Activated naive CD4-positive, alpha-beta T cell treated with anti-CD3 and anti-CD28 coated beads for 36 hours (primary cell): ENCODE measurements at regions of chr2 and their contacts with region 1.

Region 1: DNA sequence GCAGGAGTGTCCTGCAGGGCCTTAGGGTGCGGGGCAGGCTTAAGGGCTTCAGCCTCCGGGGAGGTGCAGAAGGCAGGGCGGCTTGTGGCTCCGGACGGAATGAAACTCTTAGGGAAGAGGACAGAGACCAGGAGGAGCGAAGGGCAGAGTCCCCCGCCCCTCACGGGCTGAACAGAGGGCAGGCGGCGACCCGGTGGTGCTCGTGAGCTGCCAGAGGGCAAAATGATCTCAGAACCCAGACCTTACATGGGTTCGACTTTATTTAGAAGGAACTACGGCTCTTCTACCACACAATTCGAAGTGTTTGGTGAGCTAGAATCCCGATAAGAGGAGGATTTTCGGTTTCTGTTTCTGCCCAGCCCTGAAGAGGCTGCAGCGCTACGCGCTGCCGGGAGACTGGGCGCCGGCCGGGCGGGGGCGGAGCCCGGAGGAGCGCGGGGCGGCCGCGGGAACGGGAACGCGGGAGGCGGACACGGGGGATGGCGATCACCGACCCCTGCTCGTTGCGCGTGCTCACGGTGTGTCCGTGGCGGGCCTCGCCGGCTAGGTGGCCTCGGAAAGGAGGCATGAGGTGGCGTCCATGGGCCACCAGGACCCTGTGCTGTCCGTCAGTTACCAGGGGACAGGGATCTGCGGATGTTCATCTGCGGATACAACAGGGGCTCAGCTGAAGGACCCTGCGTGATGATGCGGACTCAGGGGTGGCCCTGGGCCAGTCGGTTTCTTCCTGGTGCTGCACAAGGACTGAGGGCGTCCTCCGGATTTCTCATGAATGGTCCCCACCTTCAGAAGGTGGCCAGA is 4.2 kb upstream of the SP100 start:
- DNase-seq: peak; percentile 68
- H3K4me3 Mint-ChIP-seq: peak overlapping the region; percentile 90
- H3K27ac Mint-ChIP-seq: peak overlapping the region; percentile 85
- H3K4me1 Mint-ChIP-seq: peaks cover 72% of the 10 kb centered on the region
- H3K27me3 Mint-ChIP-seq: no peaks in the 10 kb centered on the region

Region 2: DNA sequence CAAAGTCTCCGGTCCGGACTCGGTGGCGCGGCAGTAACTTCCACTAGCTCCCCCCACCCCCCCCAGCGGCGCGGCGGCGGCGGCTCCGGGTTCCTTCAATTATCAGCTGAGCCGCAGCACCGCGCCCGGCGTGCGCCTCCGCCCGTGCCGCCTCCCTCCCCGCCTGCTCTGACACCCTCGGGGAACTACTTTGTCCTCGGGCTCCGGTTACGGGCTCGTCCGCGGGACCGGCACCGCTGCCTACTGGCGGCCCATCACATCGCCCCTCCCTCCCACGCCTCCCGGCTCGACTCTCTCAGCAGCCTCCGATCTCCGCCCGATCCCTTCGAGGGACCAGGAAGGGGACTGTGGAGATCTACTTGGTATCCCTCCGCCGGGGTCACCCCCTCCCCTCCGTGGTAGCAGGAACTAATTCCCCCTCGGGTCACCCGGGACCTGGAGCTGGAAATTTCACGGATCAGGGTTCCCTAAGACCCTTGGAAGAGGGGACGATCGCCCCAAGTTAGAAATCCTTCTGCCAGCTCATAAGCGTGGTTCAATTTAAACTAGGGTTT is 489.8 kb before region 1 on chr2 and contains the start of gene TRIP12:
- CTCF ChIA-PET with region 1: no interaction called
- intact Hi-C with region 1: loop called (anchors 5 kb)
- DNase-seq: peak; percentile 91
- H3K4me3 Mint-ChIP-seq: peak within 1 kb of the TSS; percentile 90
- H3K27ac Mint-ChIP-seq: peak within 1 kb of the TSS; percentile 99
- H3K4me1 Mint-ChIP-seq: peaks cover 34% of the 10 kb centered on the region
- H3K27me3 Mint-ChIP-seq: no peaks in the 10 kb centered on the region
- total RNA-seq, gene TRIP12: 188 to 190 TPM

Region 3: DNA sequence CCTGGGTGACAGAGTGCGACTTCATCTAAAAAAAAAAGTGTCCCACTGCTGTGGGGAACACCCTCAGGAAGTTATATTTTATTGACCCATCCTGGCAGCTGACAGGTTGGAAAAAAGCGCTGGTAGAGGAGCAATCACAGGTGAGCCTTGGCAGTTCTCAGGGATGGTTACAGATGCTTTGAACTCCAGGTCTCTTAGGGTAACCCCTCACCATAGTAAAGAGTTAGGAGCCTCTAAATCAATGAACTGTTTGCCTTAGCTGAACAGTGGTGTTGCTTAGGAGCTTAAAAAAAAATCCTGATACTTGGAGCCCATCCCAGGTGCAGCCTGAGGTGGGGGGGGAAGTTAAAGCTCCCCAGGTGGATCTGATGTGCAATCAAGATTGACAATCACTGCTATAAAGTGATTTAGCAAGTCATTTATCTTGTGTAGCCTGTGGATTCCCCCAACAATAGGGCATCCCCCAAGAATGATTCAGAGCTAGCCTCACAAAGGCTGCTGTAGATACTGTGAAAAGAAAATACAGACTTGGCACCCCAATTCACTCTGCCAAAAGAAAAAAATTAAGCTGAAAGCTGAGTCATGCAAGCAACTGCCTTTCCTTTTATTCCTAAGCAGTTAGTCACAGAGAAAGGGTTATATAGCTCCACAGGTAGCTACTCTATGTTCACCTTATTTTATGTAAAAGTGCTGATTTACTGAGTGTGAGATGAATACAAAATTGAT is 357.9 kb before region 1 on chr2:
- CTCF ChIA-PET with region 1: no interaction called
- intact Hi-C with region 1: loop called (anchors 5 kb)
- DNase-seq: peak; percentile 67
- H3K4me3 Mint-ChIP-seq: no peak overlapping the region
- H3K27ac Mint-ChIP-seq: no peak overlapping the region
- H3K4me1 Mint-ChIP-seq: peaks cover 17% of the 10 kb centered on the region
- H3K27me3 Mint-ChIP-seq: no peaks in the 10 kb centered on the region

Region 4: DNA sequence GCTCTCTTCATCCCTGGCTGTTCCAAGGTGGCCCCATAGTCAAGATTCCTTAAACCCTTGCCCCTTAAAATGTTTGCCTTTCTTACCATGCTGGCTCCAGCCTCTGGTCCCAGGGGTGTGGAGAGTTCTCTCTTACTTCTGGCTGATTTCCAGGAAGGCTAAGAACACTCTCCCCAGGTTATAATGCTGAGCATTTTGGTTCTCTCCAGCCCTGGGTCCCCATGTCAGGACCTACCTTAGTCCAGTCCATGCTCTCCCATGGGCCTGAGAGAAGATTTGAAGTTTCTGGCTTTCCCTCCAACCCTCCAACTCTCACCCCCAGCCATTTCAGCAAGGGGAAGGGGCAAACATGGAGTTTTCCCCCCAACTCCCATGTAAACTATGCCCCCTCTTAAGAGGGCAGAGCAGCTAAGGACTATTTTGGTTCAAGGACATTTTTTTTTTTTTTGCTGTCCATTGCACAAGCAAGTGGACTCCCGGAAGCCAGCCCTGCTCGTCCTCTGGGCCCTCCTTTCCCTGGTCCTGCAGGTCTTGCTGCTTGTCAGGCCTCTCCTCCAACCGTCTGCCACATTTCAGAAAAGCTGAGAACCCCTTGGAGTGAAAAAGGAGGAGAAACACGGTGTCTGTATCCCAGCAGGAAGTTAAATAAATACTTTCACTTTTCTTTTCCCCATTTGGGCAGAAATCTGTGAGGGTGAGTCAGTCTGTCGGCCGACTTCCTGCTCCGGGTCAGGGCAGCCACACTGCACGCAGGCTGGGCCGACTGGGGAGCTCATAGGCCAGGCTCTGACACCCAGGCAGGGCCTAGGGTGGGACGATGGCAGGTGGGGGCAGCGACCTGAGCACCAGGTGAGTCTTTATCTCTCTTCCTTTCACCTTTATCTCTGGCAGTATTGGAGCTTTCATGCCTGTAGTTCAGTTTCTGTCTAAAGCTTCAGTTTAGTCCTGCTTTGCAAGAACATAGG is 85.0 kb before region 1 on chr2 and contains the start of gene SP140L:
- CTCF ChIA-PET with region 1: interaction called, 4 read pairs
- intact Hi-C with region 1: loop called (anchors 2 kb)
- DNase-seq: peak; percentile 88
- H3K4me3 Mint-ChIP-seq: peak within 1 kb of the TSS; percentile 96
- H3K27ac Mint-ChIP-seq: peak within 1 kb of the TSS; percentile 99
- H3K4me1 Mint-ChIP-seq: peaks cover 60% of the 10 kb centered on the region
- H3K27me3 Mint-ChIP-seq: no peaks in the 10 kb centered on the region
- total RNA-seq, gene SP140L: 41.8 to 44.7 TPM

Region 5: DNA sequence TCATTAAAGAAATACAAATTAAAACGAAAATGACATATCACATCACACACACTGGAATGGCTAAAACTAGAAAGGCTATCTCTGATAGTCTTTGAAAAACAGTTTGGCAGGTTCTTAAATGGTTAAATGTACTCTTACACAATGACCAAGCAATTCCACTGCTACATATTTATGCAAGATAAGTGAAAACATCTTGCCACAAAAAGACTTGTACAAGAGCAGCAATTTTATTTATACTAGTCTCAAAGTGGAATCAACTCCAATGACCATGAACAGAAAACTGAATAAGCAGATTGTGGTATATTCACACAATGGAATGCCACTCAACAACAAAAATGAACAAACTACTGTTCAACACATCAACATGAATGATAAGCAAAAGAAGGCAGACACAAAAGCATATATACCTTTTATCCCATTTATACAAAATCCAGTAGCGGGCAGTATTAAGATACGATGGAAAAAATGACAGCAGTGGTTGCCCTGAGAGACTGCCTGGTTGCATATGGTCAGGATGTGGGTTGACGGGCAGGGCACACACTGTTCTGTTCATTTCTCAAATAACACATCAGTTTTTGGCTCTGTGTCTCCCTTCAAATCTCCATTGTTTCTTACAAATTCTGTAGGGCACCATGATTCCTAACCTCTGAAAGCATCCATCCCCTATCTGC is 29.6 kb after region 1 on chr2:
- CTCF ChIA-PET with region 1: no interaction called
- intact Hi-C with region 1: loop called (anchors 1 kb)
- DNase-seq: peak; percentile 38
- H3K4me3 Mint-ChIP-seq: no peak overlapping the region
- H3K27ac Mint-ChIP-seq: peak overlapping the region; percentile 30
- H3K4me1 Mint-ChIP-seq: peaks cover 52% of the 10 kb centered on the region
- H3K27me3 Mint-ChIP-seq: no peaks in the 10 kb centered on the region

Region 6: GRCh38 chr2:230614913-230615332 is 203.2 kb after region 1 on chr2:
- CTCF ChIA-PET with region 1: no interaction called
- intact Hi-C with region 1: loop called (anchors 2 kb)
- DNase-seq: peak; percentile 79
- H3K4me3 Mint-ChIP-seq: no peak overlapping the region
- H3K27ac Mint-ChIP-seq: peak overlapping the region; percentile 71
- H3K4me1 Mint-ChIP-seq: peaks cover 33% of the 10 kb centered on the region
- H3K27me3 Mint-ChIP-seq: no peaks in the 10 kb centered on the region

Region 7: GRCh38 chr2:231056453-231057424 is 645.0 kb after region 1 on chr2 and contains the start of gene PSMD1:
- CTCF ChIA-PET with region 1: no interaction called
- intact Hi-C with region 1: loop called (anchors 5 kb)
- DNase-seq: peak; percentile 96
- H3K4me3 Mint-ChIP-seq: peak within 1 kb of the TSS; percentile 97
- H3K27ac Mint-ChIP-seq: peak within 1 kb of the TSS; percentile 100
- H3K4me1 Mint-ChIP-seq: peaks cover 46% of the 10 kb centered on the region
- H3K27me3 Mint-ChIP-seq: peaks cover 2% of the 10 kb centered on the region
- total RNA-seq, gene PSMD1: 106 TPM